Gastrocnemius medialis (tissue), 4 donors: ENCODE measurements at regions of chr10 and their contacts with region 1.

Region 1: DNA sequence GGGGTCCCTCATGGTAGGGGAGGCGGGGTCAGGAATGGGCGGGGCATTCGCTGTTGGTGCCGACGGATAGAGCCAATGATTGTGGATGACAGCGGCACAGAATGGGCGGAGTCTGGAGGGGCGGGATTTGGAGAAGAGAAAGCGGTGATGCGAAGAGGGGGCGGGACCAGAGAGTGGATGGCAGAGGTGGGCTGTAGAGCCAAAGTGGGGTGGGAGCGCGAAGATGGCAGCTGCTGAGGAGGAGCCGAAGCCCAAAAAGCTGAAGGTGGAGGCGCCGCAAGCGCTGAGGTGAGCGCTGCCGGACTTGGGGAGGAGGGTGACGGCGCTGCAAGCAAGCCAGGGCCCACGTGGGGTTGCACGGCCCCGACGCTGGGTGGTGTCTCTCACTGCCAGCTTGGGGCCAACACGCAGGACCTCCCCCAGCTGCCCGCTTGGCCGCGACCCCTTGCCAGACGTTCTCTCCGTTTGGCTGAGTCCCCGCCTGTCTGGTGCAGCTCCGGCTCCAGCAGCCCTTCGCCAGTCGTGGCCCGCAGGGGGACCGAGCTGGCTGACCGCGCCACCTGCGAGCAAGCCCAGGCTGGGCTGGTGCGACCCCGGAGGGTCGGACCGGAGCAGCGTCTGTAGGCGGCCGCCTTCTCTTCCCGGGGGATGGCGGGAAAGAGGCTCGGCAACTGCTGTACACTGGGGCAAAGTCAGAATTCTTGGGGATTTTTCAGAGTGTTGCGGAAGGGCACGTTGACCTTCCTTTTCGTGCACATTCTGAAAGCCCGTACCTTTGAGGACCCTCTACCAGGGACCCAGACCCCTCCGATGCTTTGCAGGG is at the start of gene ADK:
- DNase-seq: peak; percentile 99
- ATAC-seq: peak; percentile 88 to 92
- H3K4me3 ChIP-seq: peak within 1 kb of the TSS; percentile 65 to 95 (median 84)
- H3K27ac ChIP-seq: peak within 1 kb of the TSS; percentile 89 to 97 (median 96)
- H3K4me1 ChIP-seq: peaks cover 38 to 52% of the 10 kb centered on the region in 2 donors
- H3K27me3 ChIP-seq: no peaks in the 10 kb centered on the region
- CTCF ChIP-seq: peak in 4 of 5 experiments; percentile 8 to 62 (median 34)
- POLR2A ChIP-seq: peak; percentile 83 to 93
- total RNA-seq, gene ADK: 15.9 to 28.8 (median 23.3) TPM

Region 2: DNA sequence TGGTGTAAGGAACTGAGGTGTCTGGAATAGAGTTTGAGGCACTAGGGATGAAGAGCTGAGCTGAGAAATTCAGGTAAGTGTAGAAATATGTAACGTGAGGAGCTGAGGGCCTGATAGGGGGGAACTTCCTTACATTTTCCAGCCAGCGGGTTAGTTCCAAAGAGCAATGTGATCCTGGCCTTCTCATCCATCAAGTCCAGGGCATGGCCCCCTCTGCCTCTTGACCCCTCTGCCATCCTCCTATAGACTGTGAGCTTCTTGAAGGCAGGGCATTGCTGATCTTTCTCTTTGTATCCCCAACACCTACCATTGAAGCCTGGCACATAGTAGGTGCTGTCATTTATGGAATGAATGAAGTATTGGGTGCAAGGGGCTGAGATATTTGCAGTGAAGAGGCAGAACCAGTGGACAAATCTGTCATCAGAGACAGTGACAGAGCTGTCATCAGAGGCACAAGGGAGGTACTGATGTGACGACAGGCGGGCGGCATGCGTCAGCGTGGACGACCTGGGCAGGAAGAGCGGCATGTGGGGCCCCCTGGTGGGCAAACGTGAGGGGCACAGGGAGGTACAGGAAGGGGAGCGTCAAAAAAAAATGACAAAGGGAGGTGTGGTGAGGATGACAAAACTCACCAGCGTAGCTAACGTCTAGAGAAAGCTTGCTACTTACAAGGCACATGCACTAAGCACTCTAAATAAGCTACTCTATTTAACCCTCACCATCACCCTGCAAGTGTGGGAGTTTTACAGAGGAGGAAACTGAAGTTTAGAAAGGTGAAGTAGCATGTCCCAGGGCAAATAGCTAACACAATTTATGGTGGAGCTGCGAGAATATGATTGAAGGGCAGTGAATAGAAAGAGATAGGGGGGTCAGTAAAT is 271.7 kb before region 1 on chr10:
- in situ Hi-C with region 1: no loop called
- intact Hi-C with region 1: no loop called
- DNase-seq: peak; percentile 69 to 84
- ATAC-seq: peak; percentile 76 to 77
- H3K4me3 ChIP-seq: no peak overlapping the region
- H3K27ac ChIP-seq: peak overlapping the region in 3 of 4 donors; percentile 45 to 55 (median 47)
- H3K4me1 ChIP-seq: peaks cover 16 to 23% of the 10 kb centered on the region in 2 donors
- H3K27me3 ChIP-seq: no peaks in the 10 kb centered on the region
- CTCF ChIP-seq: peak; percentile 88 to 98 (median 97)
- POLR2A ChIP-seq: no peak

Region 3: GRCh38 chr10:73997787-73998622 is 153.3 kb before region 1 on chr10 and contains the start of gene VCL:
- in situ Hi-C with region 1: no loop called
- intact Hi-C with region 1: loop called (anchors 5 kb)
- DNase-seq: peak; percentile 98 to 99
- ATAC-seq: peak; percentile 90
- H3K4me3 ChIP-seq: peak within 1 kb of the TSS; percentile 77 to 88 (median 86)
- H3K27ac ChIP-seq: peak within 1 kb of the TSS; percentile 86 to 97 (median 92)
- H3K4me1 ChIP-seq: peaks cover 32 to 35% of the 10 kb centered on the region in 2 donors
- H3K27me3 ChIP-seq: no peaks in the 10 kb centered on the region
- CTCF ChIP-seq: no peak
- POLR2A ChIP-seq: peak; percentile 97 to 99
- total RNA-seq, gene VCL: 129 to 299 (median 210) TPM

Region 4: GRCh38 chr10:74011770-74012169 is 139.5 kb before region 1 on chr10:
- in situ Hi-C with region 1: no loop called
- intact Hi-C with region 1: no loop called
- DNase-seq: peak in 1 of 2 donors; percentile 39
- ATAC-seq: peak; percentile 60 to 77
- H3K4me3 ChIP-seq: no peak overlapping the region
- H3K27ac ChIP-seq: peak overlapping the region; percentile 15 to 68 (median 43)
- H3K4me1 ChIP-seq: peaks cover 49 to 53% of the 10 kb centered on the region in 2 donors
- H3K27me3 ChIP-seq: no peaks in the 10 kb centered on the region
- CTCF ChIP-seq: no peak
- POLR2A ChIP-seq: no peak

Region 5: DNA sequence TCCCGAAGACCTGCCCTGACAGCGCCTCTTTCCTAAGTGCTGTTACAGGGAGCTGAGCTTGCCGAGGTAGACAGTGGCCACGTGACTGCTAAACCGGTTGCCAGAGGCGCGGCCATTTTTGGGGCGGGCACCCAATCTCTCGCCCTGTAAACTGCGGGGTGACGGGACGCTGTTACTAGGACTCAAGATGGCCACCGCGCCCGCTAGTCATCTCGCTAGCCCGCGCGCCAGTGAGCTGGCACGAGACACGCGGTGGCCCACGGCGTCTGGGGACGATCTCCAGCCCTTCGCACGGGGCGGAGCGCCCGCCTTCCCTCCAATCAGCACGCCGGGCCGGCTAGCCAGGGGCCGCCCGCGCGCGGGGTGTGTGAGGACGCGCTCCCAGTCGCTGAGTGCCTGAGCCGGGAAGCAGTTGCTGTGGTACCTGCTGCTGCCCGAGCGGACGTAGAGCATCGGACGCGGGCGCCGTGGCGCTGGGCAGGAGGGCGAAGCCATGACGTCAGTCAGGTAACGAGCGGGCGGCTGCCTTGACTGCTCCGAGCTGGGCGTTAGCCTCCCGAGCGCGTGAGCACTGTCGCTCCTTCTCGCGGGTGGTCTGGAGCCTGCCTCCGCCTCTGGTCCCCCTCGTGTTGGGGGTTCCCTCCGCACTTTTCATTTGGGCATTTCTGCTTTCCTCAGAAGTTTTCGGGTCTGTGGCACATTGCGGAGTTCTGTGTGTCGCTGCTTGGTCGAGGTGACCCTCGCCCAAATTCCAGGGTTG is 25.3 kb after region 1 on chr10:
- in situ Hi-C with region 1: no loop called
- intact Hi-C with region 1: loop called (anchors 1 kb)
- DNase-seq: peak; percentile 91 to 97
- ATAC-seq: peak; percentile 93
- H3K4me3 ChIP-seq: peak overlapping the region; percentile 66 to 83 (median 72)
- H3K27ac ChIP-seq: peak overlapping the region; percentile 82 to 89 (median 85)
- H3K4me1 ChIP-seq: peaks cover 7 to 12% of the 10 kb centered on the region in 2 donors
- H3K27me3 ChIP-seq: no peaks in the 10 kb centered on the region
- CTCF ChIP-seq: no peak
- POLR2A ChIP-seq: peak; percentile 69 to 75

Region 6: DNA sequence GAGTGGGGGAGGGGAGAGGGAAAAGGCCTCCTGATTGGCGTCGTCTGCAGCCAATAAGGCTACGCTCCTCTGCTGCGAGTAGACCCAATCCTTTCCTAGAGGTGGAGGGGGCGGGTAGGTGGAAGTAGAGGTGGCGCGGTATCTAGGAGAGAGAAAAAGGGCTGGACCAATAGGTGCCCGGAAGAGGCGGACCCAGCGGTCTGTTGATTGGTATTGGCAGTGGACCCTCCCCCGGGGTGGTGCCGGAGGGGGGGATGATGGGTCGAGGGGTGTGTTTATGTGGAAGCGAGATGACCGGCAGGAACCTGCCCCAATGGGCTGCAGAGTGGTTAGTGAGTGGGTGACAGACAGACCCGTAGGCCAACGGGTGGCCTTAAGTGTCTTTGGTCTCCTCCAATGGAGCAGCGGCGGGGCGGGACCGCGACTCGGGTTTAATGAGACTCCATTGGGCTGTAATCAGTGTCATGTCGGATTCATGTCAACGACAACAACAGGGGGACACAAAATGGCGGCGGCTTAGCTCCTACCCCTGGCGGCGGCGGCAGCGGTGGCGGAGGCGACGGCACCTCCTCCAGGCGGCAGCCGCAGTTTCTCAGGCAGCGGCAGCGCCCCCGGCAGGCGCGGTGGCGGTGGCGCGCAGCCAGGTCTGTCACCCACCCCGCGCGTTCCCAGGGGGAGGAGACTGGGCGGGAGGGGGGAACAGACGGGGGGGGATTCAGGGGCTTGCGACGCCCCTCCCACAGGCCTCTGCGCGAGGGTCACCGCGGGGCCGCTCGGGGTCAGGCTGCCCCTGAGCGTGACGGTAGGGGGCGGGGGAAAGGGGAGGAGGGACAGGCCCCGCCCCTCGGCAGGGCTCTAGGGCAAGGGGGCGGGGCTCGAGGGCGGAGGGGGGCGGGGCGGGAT is 675.1 kb after region 1 on chr10 and contains the start of gene KAT6B:
- in situ Hi-C with region 1: no loop called
- intact Hi-C with region 1: loop called (anchors 5 kb)
- DNase-seq: peak; percentile 100
- ATAC-seq: peak; percentile 81 to 83
- H3K4me3 ChIP-seq: peak within 1 kb of the TSS; percentile 92 to 97 (median 96)
- H3K27ac ChIP-seq: peak within 1 kb of the TSS; percentile 94 to 100 (median 98)
- H3K4me1 ChIP-seq: peaks cover 43 to 50% of the 10 kb centered on the region in 2 donors
- H3K27me3 ChIP-seq: no peaks in the 10 kb centered on the region
- CTCF ChIP-seq: peak in 1 of 5 experiments; percentile 9
- POLR2A ChIP-seq: peak; percentile 22 to 77
- total RNA-seq, gene KAT6B: 12.0 to 37.7 (median 21.6) TPM

Region 7: GRCh38 chr10:75099952-75100763 is 948.9 kb after region 1 on chr10:
- in situ Hi-C with region 1: no loop called
- intact Hi-C with region 1: loop called (anchors 10 kb)
- DNase-seq: peak; percentile 61 to 75
- ATAC-seq: peak; percentile 57 to 76
- H3K4me3 ChIP-seq: no peak overlapping the region
- H3K27ac ChIP-seq: peak overlapping the region; percentile 97 to 100 (median 98)
- H3K4me1 ChIP-seq: peaks cover 57% of the 10 kb centered on the region in 2 donors
- H3K27me3 ChIP-seq: no peaks in the 10 kb centered on the region
- CTCF ChIP-seq: peak; percentile 97 to 99 (median 99)
- POLR2A ChIP-seq: no peak

Region 8: GRCh38 chr10:75170215-75170614 is 1018.9 kb after region 1 on chr10:
- in situ Hi-C with region 1: no loop called
- intact Hi-C with region 1: loop called (anchors 10 kb)
- DNase-seq: no peak
- ATAC-seq: peak; percentile 98 to 99
- H3K4me3 ChIP-seq: no peak overlapping the region
- H3K27ac ChIP-seq: peak overlapping the region; percentile 72 to 80 (median 76)
- H3K4me1 ChIP-seq: peaks cover 12 to 26% of the 10 kb centered on the region in 2 donors
- H3K27me3 ChIP-seq: no peaks in the 10 kb centered on the region
- CTCF ChIP-seq: no peak
- POLR2A ChIP-seq: no peak